PC-9 (cell line): ENCODE measurements at regions of chr12 and their contacts with region 1.

Region 1: DNA sequence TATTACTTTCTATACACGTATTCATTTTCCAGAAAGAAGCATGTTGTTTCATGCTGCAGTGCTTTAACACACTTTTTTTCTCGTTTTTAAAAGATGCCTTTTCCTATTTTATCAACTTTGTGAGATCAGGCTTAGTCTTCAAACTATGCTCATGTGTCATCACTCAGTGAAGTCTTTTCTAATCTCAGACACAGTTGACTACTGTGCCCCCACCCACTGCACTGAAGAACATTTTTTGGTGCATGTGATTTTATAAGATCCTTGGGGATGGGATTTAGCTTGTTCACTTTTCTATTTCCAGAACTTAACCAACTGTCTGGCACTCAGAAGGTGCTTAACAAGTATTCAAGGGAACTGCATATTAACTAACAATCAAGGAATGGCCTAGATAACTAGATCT is 85.5 kb downstream of the CDK17 start:
- DNase-seq: no peak
- H3K4me3 ChIP-seq: no peak overlapping the region
- H3K27ac ChIP-seq: no peak overlapping the region
- H3K4me1 ChIP-seq: no peaks in the 10 kb centered on the region
- H3K27me3 ChIP-seq: no peaks in the 10 kb centered on the region
- CTCF ChIP-seq: no peak

Region 2: GRCh38 chr12:96271469-96272199 is 43.1 kb before region 1 on chr12:
- CTCF ChIA-PET with region 1: interaction called, 22 read pairs
- POLR2A ChIA-PET with region 1: no interaction called
- intact Hi-C with region 1: no loop called
- DNase-seq: no peak
- H3K4me3 ChIP-seq: no peak overlapping the region
- H3K27ac ChIP-seq: peak overlapping the region; percentile 18; the same call in 1 of the 2 replicates
- H3K4me1 ChIP-seq: no peaks in the 10 kb centered on the region
- H3K27me3 ChIP-seq: no peaks in the 10 kb centered on the region
- CTCF ChIP-seq: no peak

Region 3: DNA sequence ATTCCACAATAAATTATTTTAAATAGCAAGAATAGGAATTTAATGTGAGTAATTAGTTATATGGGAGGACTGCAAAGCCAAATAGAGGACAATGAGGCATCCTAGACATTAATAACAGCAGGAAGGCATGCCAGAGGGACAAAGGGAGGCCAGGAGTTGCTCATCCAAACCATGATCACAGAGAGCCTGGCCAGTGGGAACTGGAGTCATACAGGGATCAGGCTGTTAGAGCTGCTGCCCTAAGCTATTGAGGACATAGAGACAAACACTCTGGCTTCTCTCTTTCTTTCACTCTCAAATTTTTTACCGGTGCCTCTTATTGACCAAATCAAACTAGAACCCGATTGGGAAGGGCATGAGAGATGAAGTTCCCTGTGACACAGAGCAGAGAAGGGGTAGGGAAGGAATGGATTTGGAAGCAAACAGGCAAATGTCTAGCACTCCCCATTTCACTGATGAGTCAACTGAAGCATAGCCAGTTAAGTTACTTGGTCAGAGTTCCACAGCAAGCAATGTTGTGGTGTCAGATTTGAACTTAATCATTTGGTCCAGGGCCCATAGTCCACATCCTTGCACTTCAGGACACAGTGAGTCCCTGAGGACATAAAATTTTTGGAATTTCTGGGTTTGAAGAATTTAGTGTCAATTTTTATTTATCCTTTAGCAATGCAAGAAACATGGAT is 156.8 kb after region 1 on chr12:
- CTCF ChIA-PET with region 1: no interaction called
- POLR2A ChIA-PET with region 1: no interaction called
- intact Hi-C with region 1: no loop called
- DNase-seq: peak in 1 of 2 experiments; percentile 48
- H3K4me3 ChIP-seq: no peak overlapping the region
- H3K27ac ChIP-seq: 0 out of 2 replicates have a peak overlapping the region, but pooled peaks have one; percentile 36
- H3K4me1 ChIP-seq: peaks cover 36% of the 10 kb centered on the region
- H3K27me3 ChIP-seq: no peaks in the 10 kb centered on the region
- CTCF ChIP-seq: no peak